ENCODE measurements at regions of chr12 and their contacts with region 1.

Region 1: GRCh38 chr12:68482660-68483059 is 128.0 kb upstream of the RAP1B start:
- DNase-seq: peak; percentile 85
- ATAC-seq: peak; percentile 81
- H3K4me3 Mint-ChIP-seq: peak overlapping the region; percentile 18
- H3K27ac Mint-ChIP-seq: peak overlapping the region; percentile 98
- H3K4me1 Mint-ChIP-seq: peaks cover 46% of the 10 kb centered on the region
- H3K27me3 Mint-ChIP-seq: no peaks in the 10 kb centered on the region

Region 2: GRCh38 chr12:68451261-68452077 is 31.2 kb before region 1 on chr12:
- CTCF ChIA-PET with region 1: interaction called, 10 read pairs
- DNase-seq: peak; percentile 83
- ATAC-seq: peak; percentile 75
- H3K4me3 Mint-ChIP-seq: peak overlapping the region; percentile 74
- H3K27ac Mint-ChIP-seq: peak overlapping the region; percentile 99
- H3K4me1 Mint-ChIP-seq: peaks cover 90% of the 10 kb centered on the region
- H3K27me3 Mint-ChIP-seq: no peaks in the 10 kb centered on the region

Region 3: DNA sequence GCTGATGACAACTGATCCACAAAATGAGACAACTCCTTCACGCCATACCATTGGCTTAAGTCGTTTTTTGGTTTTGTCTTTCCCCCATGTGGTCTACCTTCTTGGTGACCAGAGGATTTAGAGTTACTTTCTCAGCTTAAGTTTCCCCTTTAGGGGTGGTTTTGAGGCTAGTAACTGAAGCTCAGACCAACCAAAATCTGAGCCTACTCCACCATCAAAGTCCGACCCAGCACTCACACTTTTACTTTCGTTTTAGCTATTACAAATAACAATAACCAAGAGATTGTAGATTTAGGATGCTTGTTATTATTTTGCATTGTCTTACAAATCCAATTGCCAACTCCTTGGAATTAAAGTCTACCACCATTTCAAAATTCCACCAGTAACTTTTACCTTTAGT is 19.9 kb before region 1 on chr12:
- CTCF ChIA-PET with region 1: interaction called, 15 read pairs
- DNase-seq: peak; percentile 52
- ATAC-seq: peak; percentile 89
- H3K4me3 Mint-ChIP-seq: peak overlapping the region; percentile 76
- H3K27ac Mint-ChIP-seq: peak overlapping the region; percentile 92
- H3K4me1 Mint-ChIP-seq: peaks cover 24% of the 10 kb centered on the region
- H3K27me3 Mint-ChIP-seq: no peaks in the 10 kb centered on the region

Region 4: DNA sequence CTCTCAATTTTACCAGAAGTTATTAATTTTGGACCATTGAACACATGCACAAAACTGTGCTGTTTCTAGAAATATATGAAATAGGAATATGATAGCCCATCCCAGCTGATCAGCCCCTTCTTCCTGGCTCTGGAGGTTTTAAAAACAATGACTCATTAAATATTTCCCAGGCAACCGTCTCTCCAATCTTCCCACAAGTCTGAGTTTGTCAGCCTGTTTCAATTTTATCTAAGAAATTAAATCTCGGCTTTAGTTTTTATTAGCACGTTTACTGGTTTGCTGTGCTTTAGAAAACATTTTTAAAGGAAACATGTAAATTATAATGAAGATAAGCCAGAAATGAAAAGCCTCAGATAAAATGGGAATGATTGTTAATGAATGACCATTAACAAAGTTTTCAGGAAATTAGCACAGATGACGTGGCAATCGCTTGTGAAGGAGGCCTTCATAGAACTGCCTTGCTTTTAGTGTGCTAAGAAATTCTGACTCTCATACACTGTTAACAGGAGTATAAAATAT is 38.7 kb after region 1 on chr12:
- CTCF ChIA-PET with region 1: no interaction called
- DNase-seq: no peak
- ATAC-seq: no peak
- H3K4me3 Mint-ChIP-seq: no peak overlapping the region
- H3K27ac Mint-ChIP-seq: no peak overlapping the region
- H3K4me1 Mint-ChIP-seq: no peaks in the 10 kb centered on the region
- H3K27me3 Mint-ChIP-seq: peaks cover 3% of the 10 kb centered on the region

Region 5: GRCh38 chr12:68559984-68560850 is 77.6 kb after region 1 on chr12:
- CTCF ChIA-PET with region 1: no interaction called
- DNase-seq: no peak
- ATAC-seq: no peak
- H3K4me3 Mint-ChIP-seq: no peak overlapping the region
- H3K27ac Mint-ChIP-seq: no peak overlapping the region
- H3K4me1 Mint-ChIP-seq: peaks cover 29% of the 10 kb centered on the region
- H3K27me3 Mint-ChIP-seq: peaks cover 3% of the 10 kb centered on the region

Region 6: GRCh38 chr12:68591734-68592418 is 109.2 kb after region 1 on chr12:
- CTCF ChIA-PET with region 1: no interaction called
- DNase-seq: peak; percentile 45
- ATAC-seq: peak; percentile 52
- H3K4me3 Mint-ChIP-seq: peak overlapping the region; percentile 32
- H3K27ac Mint-ChIP-seq: peak overlapping the region; percentile 84
- H3K4me1 Mint-ChIP-seq: peaks cover 29% of the 10 kb centered on the region
- H3K27me3 Mint-ChIP-seq: no peaks in the 10 kb centered on the region